ENCODE measurements at regions of chr9 and their contacts with region 1.

Region 1: GRCh38 chr9:21919377-21920362 is 74.5 kb downstream of the CDKN2A start:
- DNase-seq: peak in 7 of 9 donors; percentile 39 to 78 (median 60)
- ATAC-seq: peak; percentile 80
- H3K4me3 ChIP-seq: peak overlapping the region; percentile 2
- H3K4me3 Mint-ChIP-seq: peak overlapping the region; percentile 3 to 76 (median 58)
- H3K27ac ChIP-seq: no peak overlapping the region
- H3K27ac Mint-ChIP-seq: peak overlapping the region; percentile 15 to 90 (median 75)
- H3K4me1 ChIP-seq: peaks cover 13 to 14% of the 10 kb centered on the region in 2 donors
- H3K4me1 Mint-ChIP-seq: peaks cover 12 to 41% (median 28%) of the 10 kb centered on the region in 7 donors
- H3K27me3 ChIP-seq: no peaks in the 10 kb centered on the region
- H3K27me3 Mint-ChIP-seq: no peaks in the 10 kb centered on the region

Region 2: GRCh38 chr9:21831961-21832509 is 87.6 kb before region 1 on chr9:
- CTCF ChIA-PET with region 1: no interaction called
- POLR2A ChIA-PET with region 1: no interaction called
- intact Hi-C with region 1: loop called in 1 of 2 experiments (anchors 5 kb)
- DNase-seq: peak in 1 of 9 donors; percentile 54
- ATAC-seq: peak; percentile 84
- H3K4me3 ChIP-seq: no peak overlapping the region
- H3K4me3 Mint-ChIP-seq: peak overlapping the region in 1 of 10 donors; percentile 16
- H3K27ac ChIP-seq: no peak overlapping the region
- H3K27ac Mint-ChIP-seq: peak overlapping the region in 2 of 9 donors; percentile 6 to 16
- H3K4me1 ChIP-seq: no peaks in the 10 kb centered on the region
- H3K4me1 Mint-ChIP-seq: peaks cover 0 to 53% (median 10%) of the 10 kb centered on the region in 7 donors
- H3K27me3 ChIP-seq: no peaks in the 10 kb centered on the region
- H3K27me3 Mint-ChIP-seq: no peaks in the 10 kb centered on the region

Region 3: GRCh38 chr9:21852754-21853153 is 66.9 kb before region 1 on chr9:
- CTCF ChIA-PET with region 1: no interaction called
- POLR2A ChIA-PET with region 1: no interaction called
- intact Hi-C with region 1: loop called in 1 of 2 experiments (anchors 10 kb)
- DNase-seq: no peak
- ATAC-seq: no peak
- H3K4me3 ChIP-seq: no peak overlapping the region
- H3K4me3 Mint-ChIP-seq: no peak overlapping the region
- H3K27ac ChIP-seq: no peak overlapping the region
- H3K27ac Mint-ChIP-seq: peak overlapping the region in 1 of 9 donors; percentile 10
- H3K4me1 ChIP-seq: no peaks in the 10 kb centered on the region
- H3K4me1 Mint-ChIP-seq: peaks cover 1 to 26% (median 6%) of the 10 kb centered on the region in 7 donors
- H3K27me3 ChIP-seq: no peaks in the 10 kb centered on the region
- H3K27me3 Mint-ChIP-seq: no peaks in the 10 kb centered on the region

Region 4: DNA sequence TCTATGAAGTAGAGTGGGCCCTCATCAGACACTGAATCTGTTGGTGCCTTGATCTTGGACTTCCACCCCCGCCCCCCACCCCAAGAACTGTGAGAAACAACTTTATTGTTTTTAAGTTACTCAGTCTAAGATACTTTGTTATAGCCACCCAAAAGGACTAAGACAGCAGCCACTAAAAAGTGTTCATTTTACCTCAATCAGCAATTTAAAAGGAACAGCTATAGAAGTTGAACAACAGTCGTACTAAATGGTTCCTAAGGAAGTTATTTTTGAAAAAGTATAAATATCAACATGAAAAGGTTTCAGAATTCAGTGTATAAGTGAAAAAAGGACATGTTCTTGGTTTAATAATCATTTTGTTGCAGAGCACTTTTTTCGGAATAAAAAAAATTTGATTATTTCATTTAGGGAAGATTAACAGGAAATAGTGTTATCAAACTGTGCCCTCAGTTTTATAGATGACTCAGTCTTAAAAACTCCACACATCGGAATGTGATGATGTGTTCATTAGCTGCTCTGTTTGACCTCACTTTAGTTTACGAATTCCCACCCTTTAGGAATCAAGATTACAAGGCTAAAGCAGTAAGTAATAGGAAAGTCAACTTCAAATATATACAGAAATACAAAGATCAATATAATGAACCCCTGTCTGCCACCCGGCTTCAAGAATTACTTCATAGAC is 46.0 kb before region 1 on chr9:
- CTCF ChIA-PET with region 1: no interaction called
- POLR2A ChIA-PET with region 1: no interaction called
- intact Hi-C with region 1: loop called in 1 of 2 experiments (anchors 5 kb)
- DNase-seq: no peak
- ATAC-seq: no peak
- H3K4me3 ChIP-seq: no peak overlapping the region
- H3K4me3 Mint-ChIP-seq: no peak overlapping the region
- H3K27ac ChIP-seq: no peak overlapping the region
- H3K27ac Mint-ChIP-seq: no peak overlapping the region
- H3K4me1 ChIP-seq: no peaks in the 10 kb centered on the region
- H3K4me1 Mint-ChIP-seq: peaks cover 0 to 10% (median 0%) of the 10 kb centered on the region in 7 donors
- H3K27me3 ChIP-seq: no peaks in the 10 kb centered on the region
- H3K27me3 Mint-ChIP-seq: no peaks in the 10 kb centered on the region

Region 5: GRCh38 chr9:21965401-21965951 is 45.8 kb after region 1 on chr9:
- CTCF ChIA-PET with region 1: no interaction called
- POLR2A ChIA-PET with region 1: no interaction called
- intact Hi-C with region 1: loop called (anchors 2 to 5 kb)
- DNase-seq: peak in 1 of 9 donors; percentile 53
- ATAC-seq: peak; percentile 75
- H3K4me3 ChIP-seq: peak overlapping the region; percentile 33
- H3K4me3 Mint-ChIP-seq: peak overlapping the region in 9 of 10 donors; percentile 1 to 81 (median 57)
- H3K27ac ChIP-seq: no peak overlapping the region
- H3K27ac Mint-ChIP-seq: peak overlapping the region in 5 of 9 donors; percentile 1 to 78 (median 61)
- H3K4me1 ChIP-seq: peaks cover 10 to 18% of the 10 kb centered on the region in 2 donors
- H3K4me1 Mint-ChIP-seq: peaks cover 9 to 35% (median 25%) of the 10 kb centered on the region in 7 donors
- H3K27me3 ChIP-seq: peaks cover 56 to 66% of the 10 kb centered on the region in 2 donors
- H3K27me3 Mint-ChIP-seq: peaks cover 89 to 94% (median 94%) of the 10 kb centered on the region in 5 donors

Region 6: GRCh38 chr9:22244141-22245011 is 324.7 kb after region 1 on chr9:
- CTCF ChIA-PET with region 1: no interaction called
- POLR2A ChIA-PET with region 1: no interaction called
- intact Hi-C with region 1: loop called in 1 of 2 experiments (anchors 5 kb)
- DNase-seq: peak in 6 of 9 donors; percentile 5 to 35 (median 16)
- ATAC-seq: peak; percentile 84
- H3K4me3 ChIP-seq: no peak overlapping the region
- H3K4me3 Mint-ChIP-seq: peak overlapping the region in 6 of 10 donors; percentile 6 to 61 (median 38)
- H3K27ac ChIP-seq: no peak overlapping the region
- H3K27ac Mint-ChIP-seq: no peak overlapping the region
- H3K4me1 ChIP-seq: no peaks in the 10 kb centered on the region
- H3K4me1 Mint-ChIP-seq: peaks cover 0 to 20% (median 9%) of the 10 kb centered on the region in 7 donors
- H3K27me3 ChIP-seq: no peaks in the 10 kb centered on the region
- H3K27me3 Mint-ChIP-seq: peaks cover 5 to 55% (median 14%) of the 10 kb centered on the region in 5 donors